Posterior vena cava (tissue), 2 donors: ENCODE measurements at regions of chr16 and their contacts with region 1.

Region 1: GRCh38 chr16:87101903-87102302 is 215.3 kb downstream of the C16orf95 start:
- DNase-seq: no peak

Region 2: DNA sequence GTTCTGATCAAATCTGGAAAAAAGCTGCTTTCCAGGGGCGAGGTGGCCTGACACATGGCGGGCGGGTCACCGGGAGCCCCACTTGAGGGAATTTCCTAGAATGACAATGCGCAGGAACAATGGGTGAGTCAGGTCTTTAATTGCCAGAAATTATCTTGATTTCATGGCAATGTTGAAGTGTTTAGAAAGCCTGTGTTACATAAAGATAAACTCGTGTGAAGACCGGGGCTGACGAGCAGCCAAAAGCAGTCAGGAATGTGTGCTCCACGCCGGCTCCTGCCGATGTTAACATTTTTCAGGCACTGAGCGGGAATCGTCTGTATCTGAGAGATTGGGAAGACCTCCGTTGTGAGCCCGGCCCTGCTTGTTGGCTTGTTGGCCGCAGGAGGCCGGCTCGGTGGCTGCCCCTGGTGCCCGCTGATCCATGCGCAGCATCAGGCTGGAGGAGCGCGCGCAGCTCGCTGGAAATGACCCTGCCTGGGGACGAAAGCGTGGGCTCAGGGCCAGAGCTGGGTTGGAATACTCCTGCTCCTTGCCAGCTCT is 170.4 kb before region 1 on chr16:
- intact Hi-C with region 1: no loop called
- DNase-seq: peak; percentile 90

Region 3: GRCh38 chr16:87043231-87044031 is 58.5 kb before region 1 on chr16:
- intact Hi-C with region 1: loop called in 1 of 2 experiments (anchors 2 kb)
- DNase-seq: no peak

Region 4: DNA sequence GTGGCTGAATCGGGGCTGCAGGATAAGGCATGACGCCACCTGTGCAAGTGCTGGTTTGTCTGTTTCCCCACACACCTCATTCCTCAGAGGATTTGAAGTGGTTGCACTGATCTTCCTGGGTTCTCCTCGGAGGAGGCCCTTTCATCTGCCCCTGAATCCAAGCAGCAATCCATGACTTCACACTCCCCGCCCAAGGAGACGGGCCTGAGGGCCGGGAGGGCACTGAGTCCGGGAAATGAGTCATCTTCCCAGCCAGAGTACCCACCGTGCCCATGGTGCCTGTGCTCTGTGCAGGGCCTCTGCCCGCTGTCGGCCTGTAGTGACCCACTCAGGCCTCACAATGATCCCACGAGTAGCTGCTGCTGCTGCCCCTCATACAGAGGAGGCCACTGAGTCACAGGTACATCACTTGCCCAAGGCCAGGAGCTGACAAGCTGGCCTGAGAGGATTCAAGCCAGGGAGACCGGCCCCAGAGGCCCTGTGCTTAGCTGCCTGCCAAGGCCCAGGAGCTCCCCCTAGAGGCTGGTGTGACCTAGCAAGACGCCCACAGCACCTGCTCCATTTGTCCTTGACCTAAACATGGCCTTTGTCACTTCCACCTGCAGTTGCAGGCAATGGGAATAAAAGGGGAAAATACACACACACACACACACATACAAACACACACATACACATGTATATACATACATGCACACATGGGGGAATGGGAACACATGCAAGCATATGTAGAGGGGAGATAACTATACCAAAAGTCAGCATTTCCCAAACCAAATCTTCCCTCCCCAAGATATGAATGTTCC is 24.8 kb before region 1 on chr16:
- intact Hi-C with region 1: loop called in 1 of 2 experiments (anchors 1 kb)
- DNase-seq: no peak

Region 5: GRCh38 chr16:87550496-87550961 is 448.6 kb after region 1 on chr16:
- intact Hi-C with region 1: no loop called
- DNase-seq: no peak